Heart right ventricle (tissue), 16 donors: ENCODE measurements at regions of chr11 and their contacts with region 1.

Region 1: GRCh38 chr11:119509969-119510401 is 87.0 kb upstream of the THY1 start:
- DNase-seq: no peak
- ATAC-seq: peak; percentile 27 to 87 (median 60)
- H3K4me3 ChIP-seq: no peak overlapping the region
- H3K27ac ChIP-seq: peak overlapping the region in 1 of 10 donors; percentile 76
- H3K4me1 ChIP-seq: peaks cover 0 to 13% (median 0%) of the 10 kb centered on the region in 9 donors
- H3K27me3 ChIP-seq: peaks cover 0 to 33% (median 11%) of the 10 kb centered on the region in 7 donors
- CTCF ChIP-seq: no peak

Region 2: GRCh38 chr11:117690484-117691217 is 1819.3 kb before region 1 on chr11:
- intact Hi-C with region 1: no loop called
- DNase-seq: no peak
- ATAC-seq: peak in 2 of 8 donors; percentile 28 to 37
- H3K4me3 ChIP-seq: no peak overlapping the region
- H3K27ac ChIP-seq: no peak overlapping the region
- H3K4me1 ChIP-seq: peaks cover 7 to 17% (median 12%) of the 10 kb centered on the region in 9 donors
- H3K27me3 ChIP-seq: peaks cover 0 to 4% (median 0%) of the 10 kb centered on the region in 7 donors
- CTCF ChIP-seq: no peak

Region 3: DNA sequence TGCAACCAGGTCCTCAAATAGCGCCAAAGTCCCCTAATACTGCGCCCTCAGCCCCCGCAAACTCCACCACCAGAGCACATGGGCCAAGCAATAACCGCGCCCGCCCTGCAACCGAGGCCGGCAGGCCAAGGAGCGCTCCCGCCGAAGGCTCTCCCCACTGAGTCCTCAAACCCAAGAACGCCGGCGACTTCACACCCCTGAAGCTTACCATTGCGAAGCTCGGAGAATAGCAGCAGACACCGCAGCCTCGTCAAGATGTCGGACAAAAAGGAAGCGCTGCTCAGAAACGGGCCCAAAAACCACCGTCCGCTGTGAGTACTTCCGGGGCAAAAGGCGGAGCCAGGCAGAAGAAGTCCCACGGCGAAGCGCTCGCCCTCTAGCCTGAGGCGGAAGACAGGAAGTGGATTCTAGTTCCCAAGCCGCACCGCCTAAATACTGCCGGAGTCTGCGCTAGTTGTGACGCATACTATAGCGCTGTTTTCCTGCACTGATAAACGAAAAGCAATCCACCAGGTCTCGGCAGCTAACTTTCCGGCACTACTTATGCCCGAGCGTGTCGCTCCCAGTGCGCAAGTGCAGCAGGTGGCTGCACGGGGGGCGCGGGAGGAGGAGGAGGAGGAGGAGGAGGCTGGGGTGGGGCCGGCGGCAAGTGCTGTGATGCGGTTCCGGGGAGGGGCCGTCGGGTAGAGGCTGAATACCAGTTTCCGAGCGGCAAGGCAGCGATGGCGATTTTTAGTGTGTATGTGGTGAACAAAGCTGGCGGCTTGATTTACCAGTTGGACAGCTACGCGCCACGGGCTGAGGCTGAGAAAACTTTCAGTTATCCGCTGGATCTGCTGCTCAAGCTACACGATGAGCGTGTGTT is 491.7 kb before region 1 on chr11 and contains the starts of genes RPS25 and TRAPPC4:
- intact Hi-C with region 1: no loop called
- DNase-seq: peak; percentile 93 to 96
- ATAC-seq: peak; percentile 95 to 98 (median 96)
- H3K4me3 ChIP-seq: peak within 1 kb of the TSS; percentile 81 to 99 (median 86)
- H3K27ac ChIP-seq: peak within 1 kb of the TSS; percentile 80 to 98 (median 94)
- H3K4me1 ChIP-seq: peaks cover 5 to 50% (median 44%) of the 10 kb centered on the region in 9 donors
- H3K27me3 ChIP-seq: no peaks in the 10 kb centered on the region
- CTCF ChIP-seq: peak in 1 of 9 donors; percentile 30
- total RNA-seq, gene RPS25: 743 to 915 (median 823) TPM
- total RNA-seq, gene TRAPPC4: 29.5 to 51.4 (median 37.5) TPM

Region 4: GRCh38 chr11:119258180-119258579 is 251.8 kb before region 1 on chr11:
- intact Hi-C with region 1: no loop called
- DNase-seq: no peak
- ATAC-seq: no peak
- H3K4me3 ChIP-seq: no peak overlapping the region
- H3K27ac ChIP-seq: no peak overlapping the region
- H3K4me1 ChIP-seq: peaks cover 5 to 53% (median 13%) of the 10 kb centered on the region in 9 donors
- H3K27me3 ChIP-seq: no peaks in the 10 kb centered on the region
- CTCF ChIP-seq: no peak

Region 5: DNA sequence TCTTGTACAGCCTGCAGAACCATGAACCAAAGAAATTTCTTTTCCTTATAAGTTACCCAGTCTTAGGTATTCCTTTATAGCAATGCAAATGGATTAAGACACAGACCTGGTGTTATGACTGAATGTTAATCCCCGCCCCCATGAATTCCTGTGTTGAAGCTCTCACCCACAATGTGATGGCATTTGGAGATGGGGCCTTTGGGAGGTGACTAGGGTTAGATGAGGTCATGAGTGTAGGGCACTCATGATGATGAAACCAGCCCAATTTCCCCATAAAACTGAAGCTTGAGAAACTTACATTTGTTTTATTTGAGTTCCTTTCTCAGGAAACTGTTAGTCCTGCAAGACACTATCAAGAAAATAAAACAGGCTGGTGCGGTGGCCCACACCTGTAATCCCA is 28.8 kb after region 1 on chr11:
- intact Hi-C with region 1: no loop called
- DNase-seq: no peak
- ATAC-seq: no peak
- H3K4me3 ChIP-seq: no peak overlapping the region
- H3K27ac ChIP-seq: no peak overlapping the region
- H3K4me1 ChIP-seq: peaks cover 0 to 7% (median 0%) of the 10 kb centered on the region in 9 donors
- H3K27me3 ChIP-seq: peaks cover 0 to 30% (median 0%) of the 10 kb centered on the region in 7 donors
- CTCF ChIP-seq: no peak

Region 6: DNA sequence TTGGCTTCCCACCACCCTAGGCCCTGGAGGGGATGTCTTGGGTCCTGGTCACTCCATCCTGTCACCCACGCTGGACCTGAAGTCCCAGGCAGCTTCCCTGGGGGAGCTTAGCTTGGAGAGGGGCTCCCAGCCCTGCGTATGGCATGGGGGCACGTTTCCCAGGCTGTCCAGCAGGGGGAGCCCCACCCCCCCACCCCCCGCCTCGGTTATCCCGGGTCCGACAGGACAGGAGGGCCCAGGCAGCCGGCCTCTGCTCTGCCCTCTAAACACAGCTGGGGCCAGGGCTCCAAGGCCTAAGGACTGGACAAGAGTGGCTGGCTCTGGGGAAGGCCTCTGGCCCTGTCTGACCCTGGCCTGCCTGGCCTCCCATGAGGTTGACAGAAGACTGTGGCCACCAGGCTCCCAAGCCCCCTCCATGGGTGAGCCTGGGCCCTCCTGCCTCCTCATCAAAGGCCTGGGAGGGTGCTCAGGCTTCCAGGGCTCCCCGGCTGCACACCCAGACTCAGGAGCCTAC is 114.2 kb after region 1 on chr11:
- intact Hi-C with region 1: loop called in 1 of 10 experiments (anchors 10 kb)
- DNase-seq: no peak
- ATAC-seq: no peak
- H3K4me3 ChIP-seq: no peak overlapping the region
- H3K27ac ChIP-seq: no peak overlapping the region
- H3K4me1 ChIP-seq: peaks cover 0 to 23% (median 0%) of the 10 kb centered on the region in 9 donors
- H3K27me3 ChIP-seq: peaks cover 0 to 60% (median 25%) of the 10 kb centered on the region in 7 donors
- CTCF ChIP-seq: peak in 8 of 9 donors; percentile 28 to 81 (median 58)